HCT116 (cell line): ENCODE measurements at regions of chr19 and their contacts with region 1.

Region 1: DNA sequence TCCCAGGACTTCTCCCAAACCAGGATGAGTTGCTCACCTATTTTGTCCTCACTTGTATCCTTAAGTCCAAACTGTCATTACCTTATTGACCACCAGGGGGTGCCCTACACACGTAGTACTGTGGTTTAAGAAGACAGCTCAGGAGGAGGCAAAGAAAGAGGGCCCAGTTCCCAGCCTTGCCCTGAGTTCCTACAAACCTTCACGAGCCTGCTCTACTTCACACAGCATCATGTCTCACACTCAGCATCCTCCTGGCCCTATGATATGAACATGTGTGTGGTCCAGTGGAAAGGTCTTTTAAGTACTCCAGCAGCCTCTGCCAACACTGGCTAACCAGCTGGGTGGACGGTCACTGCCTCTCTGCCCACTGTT is 8.1 kb upstream of the ZNF784 start:
- DNase-seq: peak; percentile 95
- ATAC-seq: peak; percentile 69
- H3K4me3 ChIP-seq: peak overlapping the region in 1 of 2 experiments; percentile 19; a peak in 2 of 4 replicates
- H3K27ac ChIP-seq: no peak overlapping the region; the same call in 1 of the 2 replicates
- H3K4me1 ChIP-seq: peaks cover 22 to 36% of the 10 kb centered on the region in 2 experiments
- H3K27me3 ChIP-seq: no peaks in the 10 kb centered on the region
- CTCF ChIP-seq: peak; percentile 71 to 89 (median 86)
- POLR2A ChIP-seq: no peak
- RAD21 ChIP-seq: peak; percentile 73

Region 2: DNA sequence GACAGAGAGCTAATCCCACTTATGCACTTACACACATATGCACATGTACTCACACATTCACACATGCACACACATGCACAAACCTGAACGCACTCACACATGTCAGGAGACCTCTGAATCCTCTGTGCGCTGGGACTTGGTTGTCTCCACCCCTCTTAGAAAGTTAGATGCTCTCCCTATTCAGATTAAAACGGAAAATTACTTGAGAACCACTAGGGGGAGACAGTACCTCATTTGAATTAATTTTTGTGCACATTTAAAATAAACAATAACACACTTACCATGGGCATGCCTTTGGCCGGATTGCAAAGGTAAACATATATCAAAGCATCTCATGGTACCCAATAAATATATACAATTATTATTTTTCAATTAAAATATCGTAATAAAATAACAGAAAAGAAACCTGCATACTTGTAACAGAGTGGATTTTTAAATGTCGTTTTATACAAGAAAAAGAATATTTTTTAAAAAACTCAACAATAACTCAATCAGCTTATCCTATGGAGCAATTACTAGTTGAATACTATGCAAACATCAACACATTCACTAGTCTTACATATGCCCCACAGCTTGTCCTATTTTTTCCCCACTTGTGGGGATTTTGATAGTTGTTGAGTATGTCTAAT is 979.2 kb before region 1 on chr19:
- CTCF ChIA-PET with region 1: no interaction called
- POLR2A ChIA-PET with region 1: no interaction called
- RAD21 ChIA-PET with region 1: no interaction called
- intact Hi-C with region 1: loop called (anchors 10 kb)
- DNase-seq: peak; percentile 31
- ATAC-seq: peak; percentile 84
- H3K4me3 ChIP-seq: no peak overlapping the region
- H3K27ac ChIP-seq: no peak overlapping the region
- H3K4me1 ChIP-seq: no peaks in the 10 kb centered on the region
- H3K27me3 ChIP-seq: peaks cover 8% of the 10 kb centered on the region; the same call in 1 of the 2 replicates
- CTCF ChIP-seq: peak; percentile 44 to 59 (median 56); a peak in 5 of 6 replicates
- POLR2A ChIP-seq: no peak
- RAD21 ChIP-seq: peak; percentile 61

Region 3: GRCh38 chr19:55476100-55476775 is 156.2 kb before region 1 on chr19 and contains the start of gene ZNF628:
- CTCF ChIA-PET with region 1: interaction called, 6 read pairs
- POLR2A ChIA-PET with region 1: interaction called, 3 read pairs
- RAD21 ChIA-PET with region 1: no interaction called
- intact Hi-C with region 1: loop called (anchors 1 kb)
- DNase-seq: peak; percentile 96
- ATAC-seq: peak; percentile 78
- H3K4me3 ChIP-seq: peak within 1 kb of the TSS; percentile 63 to 73
- H3K27ac ChIP-seq: peak within 1 kb of the TSS; percentile 98
- H3K4me1 ChIP-seq: peaks cover 35 to 53% of the 10 kb centered on the region in 2 experiments
- H3K27me3 ChIP-seq: no peaks in the 10 kb centered on the region
- CTCF ChIP-seq: no peak
- POLR2A ChIP-seq: no peak
- RAD21 ChIP-seq: no peak
- total RNA-seq, gene ZNF628: 14.9 TPM

Region 4: GRCh38 chr19:55599468-55600279 is 32.8 kb before region 1 on chr19 and contains the start of gene FIZ1:
- CTCF ChIA-PET with region 1: interaction called, 14 read pairs
- POLR2A ChIA-PET with region 1: no interaction called
- RAD21 ChIA-PET with region 1: no interaction called
- intact Hi-C with region 1: no loop called
- DNase-seq: peak; percentile 97
- ATAC-seq: peak; percentile 78
- H3K4me3 ChIP-seq: peak within 1 kb of the TSS; percentile 56 to 67
- H3K27ac ChIP-seq: peak within 1 kb of the TSS; percentile 83
- H3K4me1 ChIP-seq: peaks cover 26 to 41% of the 10 kb centered on the region in 2 experiments
- H3K27me3 ChIP-seq: no peaks in the 10 kb centered on the region
- CTCF ChIP-seq: no peak
- POLR2A ChIP-seq: peak; percentile 50
- RAD21 ChIP-seq: no peak
- total RNA-seq, gene FIZ1: 15.3 TPM

Region 5: DNA sequence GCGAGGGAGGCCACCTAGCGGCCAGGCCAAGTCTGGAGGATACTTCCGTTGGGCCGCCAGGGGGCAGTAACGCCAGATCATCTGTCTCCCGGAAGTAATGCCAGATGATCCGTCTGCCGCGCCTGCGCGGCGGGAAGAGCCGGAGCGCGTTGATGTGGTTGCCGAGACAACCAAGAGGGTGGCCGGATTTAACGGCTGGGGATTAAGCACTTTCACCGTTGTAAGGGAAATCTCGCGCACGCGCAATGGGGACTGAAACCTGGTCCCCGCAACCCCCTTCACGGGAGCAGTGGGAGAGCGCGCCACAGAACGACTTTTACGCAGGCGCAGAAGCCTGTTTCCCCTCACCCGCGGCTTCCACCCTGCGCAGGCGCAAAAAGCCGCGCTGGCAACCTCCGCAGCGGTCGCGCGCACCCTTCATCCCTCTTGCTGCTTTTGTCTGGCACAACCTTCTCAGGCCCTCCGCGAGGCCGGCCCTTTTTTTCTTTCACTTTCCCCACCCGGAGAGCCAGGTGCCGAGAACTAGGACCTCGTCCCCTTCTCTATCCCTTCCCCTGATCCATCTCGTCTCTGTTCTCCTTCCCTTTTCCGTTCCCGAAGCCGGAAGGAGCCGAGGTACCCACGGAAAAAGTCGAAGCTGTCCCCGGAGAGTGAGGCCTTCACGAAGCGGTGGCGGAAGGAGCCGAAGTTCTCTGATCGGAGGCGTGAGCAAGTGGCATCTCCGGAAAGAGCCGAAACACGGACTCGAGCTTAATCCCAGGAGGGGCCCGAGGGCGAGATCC is 21.5 kb after region 1 on chr19:
- CTCF ChIA-PET with region 1: interaction called, 24 read pairs
- POLR2A ChIA-PET with region 1: interaction called, 9 read pairs
- RAD21 ChIA-PET with region 1: interaction called in 1 of 2 experiments, 6 read pairs
- intact Hi-C with region 1: loop called (anchors 1 kb)
- DNase-seq: peak; percentile 99
- ATAC-seq: peak; percentile 83
- H3K4me3 ChIP-seq: peak overlapping the region; percentile 67 to 87
- H3K27ac ChIP-seq: peak overlapping the region; percentile 85
- H3K4me1 ChIP-seq: peaks cover 18 to 29% of the 10 kb centered on the region in 2 experiments; a peak in 3 of 4 replicates
- H3K27me3 ChIP-seq: no peaks in the 10 kb centered on the region
- CTCF ChIP-seq: peak; percentile 97 to 100 (median 100)
- POLR2A ChIP-seq: no peak
- RAD21 ChIP-seq: no peak

Region 6: GRCh38 chr19:56333505-56333904 is 701.1 kb after region 1 on chr19:
- CTCF ChIA-PET with region 1: interaction called, 16 read pairs
- POLR2A ChIA-PET with region 1: no interaction called
- RAD21 ChIA-PET with region 1: interaction called in 1 of 2 experiments, 4 read pairs
- intact Hi-C with region 1: loop called (anchors 5 kb)
- DNase-seq: peak; percentile 48
- ATAC-seq: peak; percentile 84
- H3K4me3 ChIP-seq: no peak overlapping the region
- H3K27ac ChIP-seq: no peak overlapping the region
- H3K4me1 ChIP-seq: no peaks in the 10 kb centered on the region
- H3K27me3 ChIP-seq: peaks cover 3% of the 10 kb centered on the region; the same call in 1 of the 2 replicates
- CTCF ChIP-seq: peak; percentile 68 to 71 (median 69); a peak in 5 of 6 replicates
- POLR2A ChIP-seq: no peak
- RAD21 ChIP-seq: peak; percentile 81